Activated CD4-positive, alpha-beta T cell treated with anti-CD3 and anti-CD28 coated beads for 36 hours (primary cell): ENCODE measurements at regions of chr15 and their contacts with region 1.

Region 1: GRCh38 chr15:40928821-40929659 is at the start of gene DLL4:
- DNase-seq: peak; percentile 69
- ATAC-seq: peak; percentile 54
- H3K4me3 Mint-ChIP-seq: peak within 1 kb of the TSS; percentile 61
- H3K27ac Mint-ChIP-seq: no peak within 1 kb of the TSS
- H3K4me1 Mint-ChIP-seq: peaks cover 32% of the 10 kb centered on the region
- H3K27me3 Mint-ChIP-seq: peaks cover 58% of the 10 kb centered on the region
- total RNA-seq, gene DLL4: 0.18 to 0.30 TPM

Region 2: GRCh38 chr15:40743921-40744814 is 184.9 kb before region 1 on chr15:
- CTCF ChIA-PET with region 1: no interaction called
- POLR2A ChIA-PET with region 1: no interaction called
- intact Hi-C with region 1: no loop called
- DNase-seq: peak; percentile 82
- ATAC-seq: peak; percentile 93
- H3K4me3 Mint-ChIP-seq: peak overlapping the region; percentile 4
- H3K27ac Mint-ChIP-seq: peak overlapping the region; percentile 71
- H3K4me1 Mint-ChIP-seq: peaks cover 25% of the 10 kb centered on the region
- H3K27me3 Mint-ChIP-seq: no peaks in the 10 kb centered on the region

Region 3: GRCh38 chr15:40863660-40864270 is 65.3 kb before region 1 on chr15:
- CTCF ChIA-PET with region 1: no interaction called
- POLR2A ChIA-PET with region 1: no interaction called
- intact Hi-C with region 1: no loop called
- DNase-seq: no peak
- ATAC-seq: no peak
- H3K4me3 Mint-ChIP-seq: no peak overlapping the region
- H3K27ac Mint-ChIP-seq: no peak overlapping the region
- H3K4me1 Mint-ChIP-seq: peaks cover 3% of the 10 kb centered on the region
- H3K27me3 Mint-ChIP-seq: no peaks in the 10 kb centered on the region

Region 4: GRCh38 chr15:40941528-40942336 is 12.7 kb after region 1 on chr15:
- CTCF ChIA-PET with region 1: interaction called, 66 read pairs
- POLR2A ChIA-PET with region 1: interaction called, 9 read pairs
- intact Hi-C with region 1: no loop called
- DNase-seq: peak; percentile 81
- ATAC-seq: peak; percentile 82
- H3K4me3 Mint-ChIP-seq: peak overlapping the region; percentile 80
- H3K27ac Mint-ChIP-seq: peak overlapping the region; percentile 92
- H3K4me1 Mint-ChIP-seq: peaks cover 39% of the 10 kb centered on the region
- H3K27me3 Mint-ChIP-seq: no peaks in the 10 kb centered on the region

Region 5: DNA sequence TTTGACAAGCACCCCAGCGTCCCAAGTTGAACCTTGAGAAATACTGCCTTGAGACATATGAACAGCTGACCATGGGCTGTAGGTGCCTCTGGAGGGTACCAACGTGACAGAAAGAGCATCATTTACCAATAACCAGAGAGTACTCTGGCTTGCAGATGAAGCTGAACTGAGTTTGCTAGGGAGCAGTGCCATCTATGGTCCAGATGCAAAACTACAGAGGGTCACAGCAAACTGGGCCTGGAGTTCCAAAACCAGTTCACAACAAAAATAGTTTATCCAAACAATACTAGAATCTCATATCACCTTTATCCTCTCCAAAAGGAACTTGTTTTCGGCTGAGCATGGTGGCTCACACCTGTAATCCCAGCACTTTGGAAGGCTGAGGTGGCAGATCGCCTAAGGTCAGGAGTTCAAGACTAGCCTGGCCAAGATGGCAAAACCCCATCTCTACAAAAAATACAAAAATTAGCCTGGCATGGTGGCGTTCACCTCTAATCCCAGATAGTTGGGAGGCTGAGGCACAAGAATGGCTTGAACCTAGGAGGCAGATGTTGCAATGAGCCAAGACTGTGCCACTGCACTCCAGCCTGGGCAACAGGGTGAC is 93.5 kb after region 1 on chr15:
- CTCF ChIA-PET with region 1: interaction called, 7 read pairs
- POLR2A ChIA-PET with region 1: no interaction called
- intact Hi-C with region 1: loop called in 1 of 2 experiments (anchors 10 kb)
- DNase-seq: peak; percentile 54
- ATAC-seq: peak; percentile 80
- H3K4me3 Mint-ChIP-seq: no peak overlapping the region
- H3K27ac Mint-ChIP-seq: no peak overlapping the region
- H3K4me1 Mint-ChIP-seq: peaks cover 2% of the 10 kb centered on the region
- H3K27me3 Mint-ChIP-seq: no peaks in the 10 kb centered on the region